ENCODE measurements at regions of chr6 and their contacts with region 1.

Region 1: GRCh38 chr6:33771146-33772081 is 17.5 kb downstream of the LEMD2 start:
- DNase-seq: peak; percentile 69
- ATAC-seq: peak; percentile 75
- H3K4me3 Mint-ChIP-seq: no peak overlapping the region
- H3K27ac Mint-ChIP-seq: no peak overlapping the region
- H3K4me1 Mint-ChIP-seq: peaks cover 3% of the 10 kb centered on the region
- H3K27me3 Mint-ChIP-seq: peaks cover 3% of the 10 kb centered on the region

Region 2: DNA sequence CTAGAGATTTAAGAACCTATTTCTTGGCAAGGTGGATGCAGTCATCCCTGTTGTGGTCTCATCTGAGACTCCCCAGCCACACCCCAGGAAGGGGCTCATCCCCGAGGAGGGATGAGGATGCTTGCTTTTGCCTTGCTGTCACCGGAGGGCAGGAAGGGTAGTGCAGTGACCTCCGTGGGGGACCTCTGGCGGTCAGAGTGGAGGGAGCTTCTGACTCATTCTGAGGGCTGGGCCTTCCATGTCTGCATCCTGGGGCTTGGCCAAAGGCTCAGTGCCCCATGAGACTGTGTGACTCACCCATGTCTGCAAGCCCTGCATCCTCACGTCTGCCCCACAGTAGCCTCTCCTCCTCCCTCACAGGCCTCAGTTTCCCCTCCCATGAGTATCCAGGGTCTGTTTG is 98.6 kb before region 1 on chr6:
- CTCF ChIA-PET with region 1: no interaction called
- POLR2A ChIA-PET with region 1: no interaction called
- DNase-seq: no peak
- ATAC-seq: no peak
- H3K4me3 Mint-ChIP-seq: no peak overlapping the region
- H3K27ac Mint-ChIP-seq: no peak overlapping the region
- H3K4me1 Mint-ChIP-seq: peaks cover 7% of the 10 kb centered on the region
- H3K27me3 Mint-ChIP-seq: no peaks in the 10 kb centered on the region

Region 3: DNA sequence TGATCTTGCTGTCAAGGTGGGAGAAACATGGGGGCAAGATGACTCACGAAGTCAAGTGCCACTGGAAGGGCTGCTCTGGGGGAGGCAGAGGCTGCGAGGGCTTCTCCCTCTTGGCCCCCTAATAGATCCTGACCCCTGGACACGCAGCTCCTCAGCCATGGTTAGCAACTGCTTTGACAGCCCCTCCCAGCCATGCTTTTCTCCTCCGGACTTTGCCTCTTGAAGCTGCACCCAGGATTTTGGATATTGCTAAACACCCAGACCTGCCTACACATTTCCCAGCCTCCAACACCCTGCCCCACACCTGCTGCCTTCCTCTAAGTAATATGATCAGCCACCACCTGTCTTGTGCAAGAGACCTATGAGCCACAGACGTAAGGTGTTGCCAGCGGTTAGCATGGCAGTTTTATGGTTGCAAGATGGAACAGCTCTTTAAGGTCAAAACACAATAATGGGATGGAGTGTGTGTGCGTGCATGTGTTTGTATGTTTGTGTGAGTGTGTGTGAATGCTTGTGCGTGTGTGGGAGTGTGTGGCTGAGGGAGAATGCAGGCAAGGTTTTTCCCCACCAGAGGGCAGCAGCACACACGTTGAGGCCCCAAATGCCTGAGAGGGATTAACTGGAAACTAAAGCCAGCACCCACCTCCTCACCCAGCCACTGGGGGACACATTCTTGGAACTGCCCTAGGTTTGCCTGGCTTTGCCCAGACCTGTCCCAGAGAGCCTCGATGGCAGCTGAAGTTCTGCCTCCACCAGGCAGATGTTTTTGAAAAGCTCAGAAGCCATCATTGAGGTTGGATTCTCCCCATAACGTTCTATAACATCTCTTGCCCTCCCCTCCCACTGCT is 27.2 kb before region 1 on chr6:
- CTCF ChIA-PET with region 1: interaction called, 17 read pairs
- POLR2A ChIA-PET with region 1: no interaction called
- DNase-seq: peak; percentile 80
- ATAC-seq: peak; percentile 87
- H3K4me3 Mint-ChIP-seq: no peak overlapping the region
- H3K27ac Mint-ChIP-seq: no peak overlapping the region
- H3K4me1 Mint-ChIP-seq: no peaks in the 10 kb centered on the region
- H3K27me3 Mint-ChIP-seq: peaks cover 13% of the 10 kb centered on the region

Region 4: GRCh38 chr6:33788694-33789549 is 17.5 kb after region 1 on chr6 and contains the start of gene LEMD2:
- CTCF ChIA-PET with region 1: interaction called, 21 read pairs
- POLR2A ChIA-PET with region 1: interaction called, 3 read pairs
- DNase-seq: peak; percentile 93
- ATAC-seq: peak; percentile 87
- H3K4me3 Mint-ChIP-seq: peak within 1 kb of the TSS; percentile 94
- H3K27ac Mint-ChIP-seq: peak within 1 kb of the TSS; percentile 97
- H3K4me1 Mint-ChIP-seq: peaks cover 55% of the 10 kb centered on the region
- H3K27me3 Mint-ChIP-seq: peaks cover 5% of the 10 kb centered on the region
- total RNA-seq, gene LEMD2: 49.9 to 59.8 TPM

Region 5: GRCh38 chr6:34154668-34155447 is 383.4 kb after region 1 on chr6:
- CTCF ChIA-PET with region 1: interaction called, 39 read pairs
- POLR2A ChIA-PET with region 1: no interaction called
- DNase-seq: peak; percentile 69
- ATAC-seq: peak; percentile 84
- H3K4me3 Mint-ChIP-seq: no peak overlapping the region
- H3K27ac Mint-ChIP-seq: no peak overlapping the region
- H3K4me1 Mint-ChIP-seq: peaks cover 5% of the 10 kb centered on the region
- H3K27me3 Mint-ChIP-seq: peaks cover 49% of the 10 kb centered on the region

Region 6: GRCh38 chr6:34260576-34261267 is 489.3 kb after region 1 on chr6:
- CTCF ChIA-PET with region 1: no interaction called
- POLR2A ChIA-PET with region 1: no interaction called
- DNase-seq: no peak
- ATAC-seq: no peak
- H3K4me3 Mint-ChIP-seq: no peak overlapping the region
- H3K27ac Mint-ChIP-seq: no peak overlapping the region
- H3K4me1 Mint-ChIP-seq: no peaks in the 10 kb centered on the region
- H3K27me3 Mint-ChIP-seq: peaks cover 2% of the 10 kb centered on the region